Activated CD8-positive, alpha-beta T cell treated with anti-CD3 and anti-CD28 coated beads for 36 hours (primary cell): ENCODE measurements at regions of chr2 and their contacts with region 1.

Region 1: DNA sequence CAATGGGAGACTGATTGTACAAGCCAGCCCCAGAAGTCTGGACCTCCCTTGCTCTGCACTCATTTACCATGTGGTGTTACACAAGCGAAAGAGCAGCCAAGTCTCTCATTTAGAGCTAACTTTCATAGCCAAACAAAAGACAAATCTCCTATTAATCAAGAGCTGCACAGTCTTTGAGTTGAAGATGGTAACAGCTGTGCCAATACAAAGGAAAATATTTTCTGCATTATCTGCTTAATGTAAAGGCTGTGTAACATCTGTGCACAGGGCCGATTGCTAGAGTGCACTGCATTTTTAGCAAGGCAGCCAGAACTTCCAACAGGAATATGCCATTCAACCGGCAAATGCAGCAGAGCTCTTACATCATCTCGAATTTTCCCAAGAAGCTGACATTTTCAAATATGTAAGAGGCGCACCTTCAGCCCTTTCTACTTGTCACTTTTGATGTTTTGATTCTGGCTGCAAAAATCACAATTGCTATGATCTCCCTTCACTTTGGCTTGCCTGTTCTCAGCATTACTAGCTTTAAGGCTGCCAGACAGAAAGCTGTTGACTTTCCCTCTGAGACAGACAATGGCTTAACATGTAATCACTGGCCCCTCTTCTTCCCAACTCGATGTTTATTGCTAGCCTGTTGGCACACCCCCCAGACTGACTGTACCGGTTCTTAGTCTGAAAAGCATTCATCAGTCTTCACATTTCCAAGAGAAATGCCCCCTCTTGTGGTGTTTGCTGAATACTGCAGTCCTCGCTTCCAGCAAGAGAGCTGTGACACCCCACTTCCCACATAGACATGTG is 96.9 kb upstream of the TANK start:
- DNase-seq: peak; percentile 80
- ATAC-seq: peak; percentile 93
- H3K4me3 Mint-ChIP-seq: no peak overlapping the region
- H3K27ac Mint-ChIP-seq: no peak overlapping the region
- H3K4me1 Mint-ChIP-seq: peaks cover 9% of the 10 kb centered on the region
- H3K27me3 Mint-ChIP-seq: peaks cover 1% of the 10 kb centered on the region
- CTCF ChIP-seq: peak; percentile 93

Region 2: DNA sequence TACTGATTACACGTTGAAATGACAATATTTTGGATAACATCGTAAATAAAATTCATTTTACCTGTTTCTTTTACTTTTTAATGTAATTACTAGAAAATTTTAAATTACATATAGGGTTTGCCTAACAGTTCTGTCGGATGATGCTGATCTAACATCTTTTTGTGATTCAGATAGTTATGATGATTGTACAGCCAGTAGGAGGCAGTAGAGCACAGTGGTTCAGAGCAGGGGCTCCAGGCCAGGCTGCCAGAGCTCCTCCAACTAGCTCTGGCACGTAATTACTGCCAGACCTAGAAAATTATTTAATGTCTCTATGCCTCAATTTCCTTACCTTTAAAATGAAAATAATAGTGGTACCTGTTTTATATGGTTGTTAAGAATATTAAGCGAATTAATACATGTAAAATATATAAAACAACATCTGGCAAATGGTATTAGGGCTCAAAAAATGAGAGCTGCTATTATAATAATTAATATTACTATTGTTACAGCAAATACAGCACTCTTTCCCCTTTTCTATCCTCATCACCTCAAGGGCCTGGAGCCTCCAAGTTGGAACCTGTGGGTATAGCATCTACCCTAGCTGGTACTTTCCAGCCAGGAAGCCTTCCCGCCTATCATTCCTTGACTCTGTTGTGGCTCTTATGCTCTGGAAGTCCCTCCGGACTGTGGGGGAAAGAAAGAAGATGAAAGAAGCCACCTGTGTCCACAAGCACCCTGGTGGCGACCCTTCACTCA is 953.3 kb before region 1 on chr2:
- CTCF ChIA-PET with region 1: interaction called, 14 read pairs
- POLR2A ChIA-PET with region 1: no interaction called
- intact Hi-C with region 1: no loop called
- DNase-seq: peak; percentile 63
- ATAC-seq: peak; percentile 76
- H3K4me3 Mint-ChIP-seq: no peak overlapping the region
- H3K27ac Mint-ChIP-seq: no peak overlapping the region
- H3K4me1 Mint-ChIP-seq: no peaks in the 10 kb centered on the region
- H3K27me3 Mint-ChIP-seq: peaks cover 12% of the 10 kb centered on the region
- CTCF ChIP-seq: peak; percentile 87

Region 3: GRCh38 chr2:160952464-160953254 is 110.7 kb before region 1 on chr2:
- CTCF ChIA-PET with region 1: no interaction called
- POLR2A ChIA-PET with region 1: no interaction called
- intact Hi-C with region 1: no loop called
- DNase-seq: no peak
- ATAC-seq: no peak
- H3K4me3 Mint-ChIP-seq: no peak overlapping the region
- H3K27ac Mint-ChIP-seq: no peak overlapping the region
- H3K4me1 Mint-ChIP-seq: no peaks in the 10 kb centered on the region
- H3K27me3 Mint-ChIP-seq: no peaks in the 10 kb centered on the region
- CTCF ChIP-seq: no peak

Region 4: GRCh38 chr2:161044095-161044865 is 19.1 kb before region 1 on chr2:
- CTCF ChIA-PET with region 1: interaction called, 14 read pairs
- POLR2A ChIA-PET with region 1: interaction called, 3 read pairs
- intact Hi-C with region 1: no loop called
- DNase-seq: no peak
- ATAC-seq: no peak
- H3K4me3 Mint-ChIP-seq: no peak overlapping the region
- H3K27ac Mint-ChIP-seq: no peak overlapping the region
- H3K4me1 Mint-ChIP-seq: no peaks in the 10 kb centered on the region
- H3K27me3 Mint-ChIP-seq: peaks cover 9% of the 10 kb centered on the region
- CTCF ChIP-seq: no peak

Region 5: DNA sequence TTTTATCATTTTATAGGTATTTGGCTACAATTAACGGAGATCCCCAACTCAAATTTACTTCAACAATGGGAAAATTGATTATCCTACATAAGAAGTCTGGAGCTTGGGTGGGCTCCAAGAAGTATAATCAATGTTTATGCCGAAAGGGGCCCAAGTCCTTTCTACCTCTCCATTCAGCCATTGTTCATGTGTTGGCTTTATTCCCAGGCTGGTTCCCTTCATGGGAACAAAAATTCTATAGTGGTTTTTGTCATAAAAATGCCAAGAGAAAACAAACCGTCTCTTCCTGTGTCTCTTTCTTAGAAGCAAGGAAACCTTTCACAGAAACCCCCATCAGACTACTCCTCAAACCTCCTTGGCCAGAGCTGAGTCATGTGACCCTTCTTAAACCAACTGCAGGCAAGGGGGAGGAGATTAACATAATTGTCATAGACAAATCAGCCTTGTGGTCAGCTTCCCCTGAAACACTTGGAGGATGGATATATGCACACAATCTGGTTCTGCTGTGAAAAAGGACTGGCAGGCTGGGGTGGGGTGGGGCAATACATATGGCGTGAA is 21.8 kb after region 1 on chr2:
- CTCF ChIA-PET with region 1: interaction called, 72 read pairs
- POLR2A ChIA-PET with region 1: no interaction called
- intact Hi-C with region 1: no loop called
- DNase-seq: peak; percentile 39
- ATAC-seq: peak; percentile 80
- H3K4me3 Mint-ChIP-seq: no peak overlapping the region
- H3K27ac Mint-ChIP-seq: peak overlapping the region; percentile 27
- H3K4me1 Mint-ChIP-seq: peaks cover 24% of the 10 kb centered on the region
- H3K27me3 Mint-ChIP-seq: no peaks in the 10 kb centered on the region
- CTCF ChIP-seq: no peak

Region 6: GRCh38 chr2:161136696-161137324 is 73.5 kb after region 1 on chr2:
- CTCF ChIA-PET with region 1: interaction called, 27 read pairs
- POLR2A ChIA-PET with region 1: no interaction called
- intact Hi-C with region 1: no loop called
- DNase-seq: peak; percentile 40
- ATAC-seq: peak; percentile 90
- H3K4me3 Mint-ChIP-seq: peak overlapping the region; percentile 85
- H3K27ac Mint-ChIP-seq: peak overlapping the region; percentile 99
- H3K4me1 Mint-ChIP-seq: peaks cover 46% of the 10 kb centered on the region
- H3K27me3 Mint-ChIP-seq: no peaks in the 10 kb centered on the region
- CTCF ChIP-seq: no peak

Region 7: GRCh38 chr2:161265874-161266273 is 202.5 kb after region 1 on chr2:
- CTCF ChIA-PET with region 1: interaction called, 18 read pairs
- POLR2A ChIA-PET with region 1: no interaction called
- intact Hi-C with region 1: no loop called
- DNase-seq: no peak
- ATAC-seq: no peak
- H3K4me3 Mint-ChIP-seq: no peak overlapping the region
- H3K27ac Mint-ChIP-seq: no peak overlapping the region
- H3K4me1 Mint-ChIP-seq: no peaks in the 10 kb centered on the region
- H3K27me3 Mint-ChIP-seq: peaks cover 5% of the 10 kb centered on the region
- CTCF ChIP-seq: no peak